A549 (cell line): ENCODE measurements at regions of chr5 and their contacts with region 1.

Region 1: GRCh38 chr5:82107267-82107666 is 135.4 kb downstream of the ATG10 start:
- DNase-seq: peak; percentile 3 to 40
- ATAC-seq: peak in 1 of 2 experiments; percentile 52; a peak in 1 of 6 replicates
- H3K4me3 ChIP-seq: no peak overlapping the region
- H3K27ac ChIP-seq: no peak overlapping the region
- H3K4me1 ChIP-seq: peaks cover 32% of the 10 kb centered on the region
- CTCF ChIP-seq: peak; percentile 63
- EP300 ChIP-seq: no peak
- POLR2A ChIP-seq: no peak
- RAD21 ChIP-seq: peak; percentile 61 to 69

Region 2: GRCh38 chr5:82151662-82152061 is 44.4 kb after region 1 on chr5:
- CTCF ChIA-PET with region 1: interaction called, 10 read pairs
- POLR2A ChIA-PET with region 1: no interaction called
- DNase-seq: no peak
- ATAC-seq: no peak
- H3K4me3 ChIP-seq: no peak overlapping the region
- H3K27ac ChIP-seq: peak overlapping the region in 1 of 2 experiments; percentile 41; a peak in 1 of 6 replicates
- H3K4me1 ChIP-seq: peaks cover 48% of the 10 kb centered on the region; the same call in 2 of the 3 replicates
- CTCF ChIP-seq: no peak
- EP300 ChIP-seq: no peak
- POLR2A ChIP-seq: no peak
- RAD21 ChIP-seq: no peak

Region 3: GRCh38 chr5:82234883-82235282 is 127.6 kb after region 1 on chr5:
- CTCF ChIA-PET with region 1: no interaction called
- POLR2A ChIA-PET with region 1: no interaction called
- DNase-seq: no peak
- ATAC-seq: no peak
- H3K4me3 ChIP-seq: no peak overlapping the region
- H3K27ac ChIP-seq: no peak overlapping the region
- H3K4me1 ChIP-seq: no peaks in the 10 kb centered on the region
- CTCF ChIP-seq: no peak
- EP300 ChIP-seq: no peak
- POLR2A ChIP-seq: no peak
- RAD21 ChIP-seq: no peak

Region 4: GRCh38 chr5:82421119-82421518 is 313.9 kb after region 1 on chr5:
- CTCF ChIA-PET with region 1: no interaction called
- POLR2A ChIA-PET with region 1: no interaction called
- DNase-seq: peak; percentile 17 to 52
- ATAC-seq: peak; percentile 59 to 70; a peak in 3 of 6 replicates
- H3K4me3 ChIP-seq: no peak overlapping the region
- H3K27ac ChIP-seq: 0 out of 6 replicates have a peak overlapping the region, but pooled peaks of 1 of the 2 experiments have one; percentile 38
- H3K4me1 ChIP-seq: peaks cover 19% of the 10 kb centered on the region; the same call in 2 of the 3 replicates
- CTCF ChIP-seq: no peak
- EP300 ChIP-seq: no peak
- POLR2A ChIP-seq: no peak
- RAD21 ChIP-seq: peak in 1 of 2 experiments; percentile 22; a peak in 2 of 5 replicates